ENCODE measurements at regions of chr2 and their contacts with region 1.

Region 1: GRCh38 chr2:211455216-211455841 is 898.9 kb downstream of the CPS1 start:
- DNase-seq: peak; percentile 22
- ATAC-seq: peak; percentile 62
- H3K4me3 Mint-ChIP-seq: no peak overlapping the region
- H3K27ac Mint-ChIP-seq: no peak overlapping the region
- H3K4me1 Mint-ChIP-seq: no peaks in the 10 kb centered on the region
- H3K27me3 Mint-ChIP-seq: no peaks in the 10 kb centered on the region
- CTCF ChIP-seq: peak; percentile 79

Region 2: DNA sequence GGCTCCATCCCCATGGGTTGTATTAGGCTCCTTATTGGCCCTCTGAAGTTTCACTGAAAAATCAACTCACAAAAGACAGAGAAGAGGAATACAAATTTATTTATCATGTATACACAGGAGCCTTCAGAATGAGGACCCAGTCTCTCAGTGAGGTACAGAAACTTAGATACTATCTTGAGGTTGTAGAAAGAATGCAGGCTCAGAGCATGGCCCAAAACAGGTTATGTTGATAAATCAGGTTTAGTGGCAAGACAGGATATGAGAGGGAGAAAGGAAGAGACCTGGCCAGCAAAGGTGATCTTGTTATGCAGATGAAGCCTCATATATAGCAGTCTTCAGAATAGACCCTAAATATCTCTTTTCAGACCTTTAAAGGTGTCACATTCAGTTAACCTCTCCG is 185.9 kb before region 1 on chr2:
- CTCF ChIA-PET with region 1: no interaction called
- POLR2A ChIA-PET with region 1: no interaction called
- intact Hi-C with region 1: no loop called
- DNase-seq: no peak
- ATAC-seq: no peak
- H3K4me3 Mint-ChIP-seq: no peak overlapping the region
- H3K27ac Mint-ChIP-seq: no peak overlapping the region
- H3K4me1 Mint-ChIP-seq: no peaks in the 10 kb centered on the region
- H3K27me3 Mint-ChIP-seq: no peaks in the 10 kb centered on the region
- CTCF ChIP-seq: no peak

Region 3: DNA sequence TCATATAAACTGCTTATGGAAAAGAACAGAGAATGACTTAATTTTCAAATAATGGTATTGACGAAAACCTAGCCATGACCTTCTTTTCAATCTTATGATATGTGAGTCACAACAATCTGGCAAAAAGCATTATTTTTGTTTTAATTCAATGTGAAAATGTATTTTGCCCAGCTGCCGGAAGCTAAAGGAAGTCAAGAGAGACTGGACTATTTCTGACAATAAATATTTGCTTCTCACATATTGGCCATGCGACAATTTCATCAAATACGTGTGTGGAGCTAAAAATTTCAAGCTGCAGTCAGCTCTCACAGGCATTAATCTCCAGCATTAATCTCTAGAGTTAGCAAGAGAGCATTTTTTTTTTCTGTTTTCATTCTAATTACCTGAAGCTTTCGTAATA is 17.9 kb before region 1 on chr2:
- CTCF ChIA-PET with region 1: interaction called, 11 read pairs
- POLR2A ChIA-PET with region 1: no interaction called
- intact Hi-C with region 1: no loop called
- DNase-seq: no peak
- ATAC-seq: no peak
- H3K4me3 Mint-ChIP-seq: no peak overlapping the region
- H3K27ac Mint-ChIP-seq: no peak overlapping the region
- H3K4me1 Mint-ChIP-seq: no peaks in the 10 kb centered on the region
- H3K27me3 Mint-ChIP-seq: no peaks in the 10 kb centered on the region
- CTCF ChIP-seq: no peak

Region 4: DNA sequence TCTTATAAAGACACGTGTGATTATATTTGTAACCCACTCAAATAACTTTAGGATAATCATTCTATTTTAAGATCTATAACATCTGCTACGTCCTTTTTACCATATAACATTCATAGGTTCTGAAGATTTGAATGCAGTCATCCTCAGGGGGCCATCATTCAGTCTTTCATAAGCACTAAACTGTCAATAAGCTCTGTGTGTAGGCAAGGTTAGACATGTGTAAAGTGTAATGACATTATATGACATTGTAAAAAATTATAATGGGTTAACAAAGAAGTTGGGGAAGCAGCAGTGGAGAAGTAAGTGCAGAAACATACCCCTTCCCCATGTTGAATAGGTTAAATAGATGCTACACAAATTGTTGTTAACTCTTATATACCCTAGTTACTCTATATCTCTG is 237.4 kb after region 1 on chr2:
- CTCF ChIA-PET with region 1: no interaction called
- POLR2A ChIA-PET with region 1: no interaction called
- intact Hi-C with region 1: no loop called
- DNase-seq: no peak
- ATAC-seq: no peak
- H3K4me3 Mint-ChIP-seq: no peak overlapping the region
- H3K27ac Mint-ChIP-seq: no peak overlapping the region
- H3K4me1 Mint-ChIP-seq: no peaks in the 10 kb centered on the region
- H3K27me3 Mint-ChIP-seq: no peaks in the 10 kb centered on the region
- CTCF ChIP-seq: no peak

Measured in activated CD8-positive, alpha-beta T cell treated with anti-CD3 and anti-CD28 coated beads for 36 hours (primary cell).